Activated naive CD4-positive, alpha-beta T cell treated with anti-CD3 and anti-CD28 coated beads for 36 hours (primary cell): ENCODE measurements at regions of chr19 and their contacts with region 1.

Region 1: DNA sequence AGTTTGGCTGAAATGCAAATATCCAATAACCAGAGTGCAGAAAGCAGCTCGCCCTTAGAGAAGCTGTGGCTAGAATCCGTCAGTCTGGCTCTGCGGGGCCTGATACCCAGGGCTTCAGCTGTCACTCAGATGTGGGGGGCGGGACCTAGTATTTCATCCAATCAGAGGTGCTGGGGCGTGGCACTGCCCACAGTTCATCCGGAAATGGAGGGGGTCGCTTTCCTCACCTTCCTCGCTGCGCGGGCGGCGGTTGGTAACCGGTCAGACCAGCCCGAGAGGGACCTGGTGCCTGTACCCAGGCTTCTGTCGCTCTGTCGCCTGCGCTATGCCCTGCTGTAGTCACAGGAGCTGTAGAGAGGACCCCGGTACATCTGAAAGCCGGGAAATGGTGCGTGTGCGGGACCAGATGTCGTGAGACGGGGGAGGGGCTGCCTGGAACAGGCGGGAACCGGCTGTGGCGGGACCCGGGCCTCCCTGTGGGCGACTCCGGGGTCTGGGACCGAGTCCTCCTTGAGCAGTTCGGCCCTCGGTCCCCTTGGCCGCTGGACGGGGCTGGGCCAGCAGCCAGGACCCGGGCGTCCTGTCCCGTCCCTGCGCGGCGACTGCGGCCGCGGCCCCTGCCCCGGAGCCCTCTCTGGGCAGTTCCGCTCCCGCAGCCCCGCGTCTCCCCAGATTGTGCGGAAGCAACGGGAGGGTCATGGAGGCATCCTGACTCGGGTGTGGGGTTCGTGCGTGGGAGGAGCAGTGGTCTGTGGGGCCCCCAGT is at the start of gene ZNF700:
- DNase-seq: peak; percentile 98
- H3K4me3 Mint-ChIP-seq: peak within 1 kb of the TSS; percentile 95
- H3K27ac Mint-ChIP-seq: peak within 1 kb of the TSS; percentile 98
- H3K4me1 Mint-ChIP-seq: peaks cover 32% of the 10 kb centered on the region
- H3K27me3 Mint-ChIP-seq: no peaks in the 10 kb centered on the region
- total RNA-seq, gene ZNF700: 12.3 to 12.4 TPM

Region 2: GRCh38 chr19:11745869-11746268 is 179.2 kb before region 1 on chr19:
- CTCF ChIA-PET with region 1: no interaction called
- intact Hi-C with region 1: no loop called
- DNase-seq: no peak
- H3K4me3 Mint-ChIP-seq: no peak overlapping the region
- H3K27ac Mint-ChIP-seq: no peak overlapping the region
- H3K4me1 Mint-ChIP-seq: no peaks in the 10 kb centered on the region
- H3K27me3 Mint-ChIP-seq: peaks cover under 1% of the 10 kb centered on the region

Region 3: GRCh38 chr19:11798391-11799330 is 126.4 kb before region 1 on chr19 and contains the start of gene ZNF491:
- CTCF ChIA-PET with region 1: interaction called, 20 read pairs
- intact Hi-C with region 1: loop called (anchors 1 kb)
- DNase-seq: peak; percentile 95
- H3K4me3 Mint-ChIP-seq: peak within 1 kb of the TSS; percentile 84
- H3K27ac Mint-ChIP-seq: peak within 1 kb of the TSS; percentile 67
- H3K4me1 Mint-ChIP-seq: peaks cover 12% of the 10 kb centered on the region
- H3K27me3 Mint-ChIP-seq: peaks cover 2% of the 10 kb centered on the region
- total RNA-seq, gene ZNF491: 0.35 to 1.2 TPM

Region 4: DNA sequence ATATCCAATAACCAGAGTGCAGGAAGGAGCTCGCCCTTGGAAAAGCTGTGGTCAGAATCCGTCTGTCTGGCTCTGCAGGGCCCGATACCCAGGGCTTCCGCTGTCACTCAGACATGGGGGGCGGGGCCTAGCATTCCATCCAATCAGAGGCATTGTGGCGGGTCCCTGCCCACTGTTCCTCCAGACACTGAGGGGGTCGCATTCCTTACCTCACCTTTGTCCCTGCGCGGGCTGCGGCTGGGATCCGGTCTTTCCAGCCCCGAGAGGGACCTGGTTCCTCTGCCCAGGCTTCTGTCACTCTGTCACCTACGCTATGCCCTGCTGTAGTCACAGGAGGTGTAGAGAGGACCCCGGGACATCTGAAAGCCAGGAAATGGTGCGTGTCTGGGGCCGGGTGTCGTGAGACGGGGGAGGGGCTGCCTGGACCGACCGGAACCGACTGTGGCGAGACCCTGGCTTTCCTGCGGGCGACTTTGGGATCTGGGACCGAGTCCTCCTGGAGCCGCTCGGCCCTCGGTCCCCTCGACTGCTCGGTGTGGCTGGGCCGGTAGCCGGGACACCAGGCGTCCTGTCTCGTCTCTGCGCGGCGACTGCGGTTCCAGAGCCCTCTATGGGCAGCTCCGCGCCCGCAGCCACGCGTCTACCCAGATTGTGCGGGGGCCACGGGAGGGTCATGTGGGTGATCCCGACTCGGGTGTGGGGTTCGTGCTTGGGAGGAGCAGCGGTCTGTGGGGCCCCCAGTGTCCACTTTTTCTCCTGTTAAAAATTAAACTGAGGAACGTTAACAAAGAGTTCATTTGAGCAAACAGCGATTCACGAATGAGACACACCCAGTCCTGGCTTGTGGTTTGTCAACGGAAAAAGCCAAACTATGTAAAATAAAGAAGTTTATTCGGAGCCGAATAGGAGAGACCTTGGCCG is 37.2 kb before region 1 on chr19 and contains the start of gene ZNF69:
- CTCF ChIA-PET with region 1: interaction called, 17 read pairs
- intact Hi-C with region 1: loop called (anchors 2 kb)
- DNase-seq: peak; percentile 69
- H3K4me3 Mint-ChIP-seq: peak within 1 kb of the TSS; percentile 78
- H3K27ac Mint-ChIP-seq: peak within 1 kb of the TSS; percentile 10
- H3K4me1 Mint-ChIP-seq: peaks cover 16% of the 10 kb centered on the region
- H3K27me3 Mint-ChIP-seq: no peaks in the 10 kb centered on the region
- total RNA-seq, gene ZNF69: 0.79 to 0.95 TPM

Region 5: DNA sequence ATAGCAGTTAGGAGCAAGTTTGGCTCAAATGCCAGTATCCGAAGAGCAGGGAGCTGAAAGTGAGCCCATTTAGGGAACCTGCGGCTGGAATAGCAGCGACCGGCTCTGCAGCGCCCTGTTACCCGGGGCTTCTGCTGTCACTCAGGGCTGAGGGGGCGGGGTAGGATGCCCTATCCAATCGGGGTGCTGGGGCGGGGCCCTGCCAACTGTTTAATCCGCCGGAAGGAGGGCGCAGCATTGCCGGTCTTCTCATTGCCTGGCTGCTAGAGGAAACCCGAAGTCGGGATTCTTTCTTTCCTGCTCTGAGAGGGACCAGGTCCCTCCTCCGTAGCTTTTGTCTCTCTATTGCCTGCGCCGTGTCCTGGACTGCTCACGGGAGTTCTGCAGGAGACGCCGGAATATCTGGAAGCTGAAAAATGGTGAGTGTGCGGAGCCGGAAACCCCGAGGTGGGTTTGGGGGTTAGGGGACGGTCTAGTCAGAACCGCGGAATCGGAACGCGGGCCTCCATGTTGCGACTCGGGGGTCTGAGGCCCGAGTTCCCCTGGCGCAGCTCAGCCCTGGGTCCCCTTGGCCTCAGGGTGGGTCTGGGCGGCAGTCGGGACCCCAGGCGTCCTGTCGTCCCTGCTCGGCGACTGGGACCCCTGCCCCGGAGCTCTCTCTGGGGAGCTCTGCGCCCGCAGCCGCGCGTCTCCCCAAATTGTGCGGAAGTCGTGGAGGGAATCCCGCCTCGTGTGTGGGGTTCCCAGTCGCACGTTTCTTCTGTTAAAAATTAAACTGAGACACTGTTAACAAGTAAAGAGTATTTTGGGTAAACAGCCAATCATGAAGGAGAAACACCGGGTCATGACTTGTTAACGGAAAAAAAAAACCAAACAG is 62.6 kb after region 1 on chr19:
- CTCF ChIA-PET with region 1: interaction called, 70 read pairs
- intact Hi-C with region 1: loop called (anchors 1 kb)
- DNase-seq: peak; percentile 97
- H3K4me3 Mint-ChIP-seq: peak overlapping the region; percentile 92
- H3K27ac Mint-ChIP-seq: peak overlapping the region; percentile 92
- H3K4me1 Mint-ChIP-seq: peaks cover 22% of the 10 kb centered on the region
- H3K27me3 Mint-ChIP-seq: no peaks in the 10 kb centered on the region

Region 6: GRCh38 chr19:12052497-12053169 is 127.6 kb after region 1 on chr19 and contains the start of gene ZNF878:
- CTCF ChIA-PET with region 1: interaction called, 8 read pairs
- intact Hi-C with region 1: loop called (anchors 1 kb)
- DNase-seq: peak; percentile 80
- H3K4me3 Mint-ChIP-seq: peak within 1 kb of the TSS; percentile 80
- H3K27ac Mint-ChIP-seq: no peak within 1 kb of the TSS
- H3K4me1 Mint-ChIP-seq: peaks cover 9% of the 10 kb centered on the region
- H3K27me3 Mint-ChIP-seq: peaks cover 19% of the 10 kb centered on the region
- total RNA-seq, gene ZNF878: 0.38 to 0.49 TPM

Region 7: GRCh38 chr19:12139885-12140547 is 214.9 kb after region 1 on chr19 and contains the start of gene ZNF20:
- CTCF ChIA-PET with region 1: interaction called, 35 read pairs
- intact Hi-C with region 1: loop called (anchors 1 kb)
- DNase-seq: peak; percentile 95
- H3K4me3 Mint-ChIP-seq: peak within 1 kb of the TSS; percentile 92
- H3K27ac Mint-ChIP-seq: peak within 1 kb of the TSS; percentile 65
- H3K4me1 Mint-ChIP-seq: peaks cover 32% of the 10 kb centered on the region
- H3K27me3 Mint-ChIP-seq: no peaks in the 10 kb centered on the region
- total RNA-seq, gene ZNF20: 2.1 to 3.1 TPM